CD8-positive, alpha-beta memory T cell (primary cell): ENCODE measurements at regions of chr1 and their contacts with region 1.

Region 1: DNA sequence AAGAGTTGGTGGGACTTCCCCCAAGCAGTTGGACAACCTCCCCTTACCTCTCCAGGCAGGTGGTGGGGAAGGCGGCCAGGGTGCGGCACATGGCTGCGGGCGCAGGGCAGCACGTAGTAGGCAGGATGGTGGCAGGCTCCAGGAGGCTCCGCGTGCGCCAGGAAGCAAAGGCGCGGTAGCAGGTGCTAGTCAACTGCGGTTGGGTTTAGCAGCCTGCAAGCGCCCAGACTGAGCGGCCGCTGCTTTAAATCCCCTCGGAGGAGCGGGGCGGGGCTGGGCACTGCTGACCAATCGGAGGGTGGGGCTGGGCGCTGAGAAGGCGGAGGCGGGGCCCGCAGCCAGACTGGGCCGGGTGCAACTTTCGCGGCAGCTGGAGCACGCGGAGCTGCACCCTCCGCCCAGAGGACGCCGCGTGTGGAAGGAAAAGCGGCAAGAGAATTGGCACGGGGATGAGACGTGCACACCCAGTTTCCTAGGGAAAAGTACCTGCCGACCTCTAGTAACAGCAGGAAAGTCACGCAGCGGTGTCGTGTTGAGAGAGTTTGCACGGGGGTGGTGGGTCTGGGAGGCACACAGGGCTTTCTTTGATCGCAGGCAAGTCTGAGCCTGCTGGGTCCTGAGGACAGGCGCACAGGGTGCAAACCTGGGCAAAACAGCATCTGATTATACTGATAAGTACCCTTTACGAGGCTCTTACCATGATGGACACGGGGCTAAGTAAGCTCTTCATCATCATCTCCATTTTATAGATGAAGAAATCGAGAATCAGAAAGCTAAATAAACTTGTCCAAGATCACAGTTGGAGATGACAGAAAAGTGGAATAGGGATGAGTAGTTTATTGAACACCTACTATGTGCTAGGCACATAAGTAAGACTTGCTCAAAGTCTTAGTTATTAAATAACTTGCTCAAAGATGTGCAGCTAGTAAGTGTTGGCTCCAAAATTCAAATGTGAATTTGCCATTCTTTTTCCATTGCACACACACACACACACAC is at the start of gene RGS16:
- DNase-seq: peak; percentile 73 to 90 (median 84)
- H3K4me3 ChIP-seq: peak within 1 kb of the TSS; percentile 35
- H3K4me3 Mint-ChIP-seq: peak within 1 kb of the TSS in 6 of 7 donors; percentile 75 to 90 (median 80)
- H3K27ac ChIP-seq: no peak within 1 kb of the TSS
- H3K27ac Mint-ChIP-seq: peak within 1 kb of the TSS in 5 of 8 donors; percentile 8 to 95 (median 89)
- H3K4me1 ChIP-seq: peaks cover 26% of the 10 kb centered on the region
- H3K4me1 Mint-ChIP-seq: peaks cover 4 to 20% (median 17%) of the 10 kb centered on the region in 3 donors
- H3K27me3 ChIP-seq: no peaks in the 10 kb centered on the region
- H3K27me3 Mint-ChIP-seq: peaks cover 26 to 28% of the 10 kb centered on the region in 2 donors
- total RNA-seq, gene RGS16: 58.9 to 59.9 TPM

Region 2: GRCh38 chr1:182575539-182576149 is 28.8 kb before region 1 on chr1:
- CTCF ChIA-PET with region 1: no interaction called
- POLR2A ChIA-PET with region 1: no interaction called
- DNase-seq: no peak
- H3K4me3 ChIP-seq: no peak overlapping the region
- H3K4me3 Mint-ChIP-seq: no peak overlapping the region
- H3K27ac ChIP-seq: no peak overlapping the region
- H3K27ac Mint-ChIP-seq: no peak overlapping the region
- H3K4me1 ChIP-seq: no peaks in the 10 kb centered on the region
- H3K4me1 Mint-ChIP-seq: peaks cover 24 to 30% (median 25%) of the 10 kb centered on the region in 3 donors
- H3K27me3 ChIP-seq: no peaks in the 10 kb centered on the region
- H3K27me3 Mint-ChIP-seq: no peaks in the 10 kb centered on the region

Region 3: GRCh38 chr1:182588500-182589452 is 15.7 kb before region 1 on chr1 and contains the start of gene RNASEL:
- CTCF ChIA-PET with region 1: interaction called, 44 read pairs
- POLR2A ChIA-PET with region 1: interaction called, 5 read pairs
- DNase-seq: peak; percentile 41 to 74 (median 64)
- H3K4me3 ChIP-seq: peak within 1 kb of the TSS; percentile 90
- H3K4me3 Mint-ChIP-seq: peak within 1 kb of the TSS; percentile 92 to 99 (median 97)
- H3K27ac ChIP-seq: peak within 1 kb of the TSS; percentile 99
- H3K27ac Mint-ChIP-seq: peak within 1 kb of the TSS; percentile 98 to 100 (median 100)
- H3K4me1 ChIP-seq: peaks cover 38% of the 10 kb centered on the region
- H3K4me1 Mint-ChIP-seq: peaks cover 45 to 59% (median 55%) of the 10 kb centered on the region in 3 donors
- H3K27me3 ChIP-seq: no peaks in the 10 kb centered on the region
- H3K27me3 Mint-ChIP-seq: peaks cover 0 to 3% of the 10 kb centered on the region in 2 donors
- total RNA-seq, gene RNASEL: 5.3 to 5.6 TPM

Region 4: GRCh38 chr1:182614796-182615454 is 10.5 kb after region 1 on chr1:
- CTCF ChIA-PET with region 1: interaction called, 24 read pairs
- POLR2A ChIA-PET with region 1: interaction called, 8 read pairs
- DNase-seq: peak; percentile 20 to 61 (median 35)
- H3K4me3 ChIP-seq: peak overlapping the region; percentile 52
- H3K4me3 Mint-ChIP-seq: peak overlapping the region; percentile 64 to 89 (median 82)
- H3K27ac ChIP-seq: no peak overlapping the region
- H3K27ac Mint-ChIP-seq: peak overlapping the region; percentile 34 to 98 (median 90)
- H3K4me1 ChIP-seq: peaks cover 29% of the 10 kb centered on the region
- H3K4me1 Mint-ChIP-seq: peaks cover 34 to 41% (median 34%) of the 10 kb centered on the region in 3 donors
- H3K27me3 ChIP-seq: peaks cover 6% of the 10 kb centered on the region
- H3K27me3 Mint-ChIP-seq: peaks cover 62 to 68% of the 10 kb centered on the region in 2 donors

Region 5: DNA sequence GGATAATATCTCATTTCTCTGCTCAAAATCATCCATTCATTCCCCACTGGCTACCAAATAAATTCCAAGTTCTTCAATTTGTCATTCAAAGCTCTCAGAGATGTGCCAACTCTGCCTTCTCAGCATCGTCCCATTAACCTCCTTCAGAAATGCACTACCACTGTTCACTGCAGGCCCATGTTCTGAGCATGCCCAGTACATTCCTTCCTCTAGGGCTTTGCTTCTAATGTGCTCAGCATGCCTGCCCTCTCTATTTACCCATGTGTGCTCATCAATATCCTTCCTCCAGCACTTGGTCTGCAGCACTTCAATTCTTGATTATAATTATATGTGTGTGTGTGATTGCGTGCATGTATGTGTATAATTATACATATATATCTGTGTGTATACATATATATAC is 116.0 kb after region 1 on chr1:
- CTCF ChIA-PET with region 1: no interaction called
- POLR2A ChIA-PET with region 1: no interaction called
- DNase-seq: no peak
- H3K4me3 ChIP-seq: no peak overlapping the region
- H3K4me3 Mint-ChIP-seq: no peak overlapping the region
- H3K27ac ChIP-seq: no peak overlapping the region
- H3K27ac Mint-ChIP-seq: no peak overlapping the region
- H3K4me1 ChIP-seq: peaks cover 8% of the 10 kb centered on the region
- H3K4me1 Mint-ChIP-seq: peaks cover 11 to 15% (median 13%) of the 10 kb centered on the region in 3 donors
- H3K27me3 ChIP-seq: no peaks in the 10 kb centered on the region
- H3K27me3 Mint-ChIP-seq: peaks cover 1 to 3% of the 10 kb centered on the region in 2 donors

Region 6: GRCh38 chr1:182789138-182790076 is 184.9 kb after region 1 on chr1 and contains the start of gene NPL:
- CTCF ChIA-PET with region 1: interaction called, 306 read pairs
- POLR2A ChIA-PET with region 1: interaction called, 4 read pairs
- DNase-seq: peak; percentile 76 to 88 (median 85)
- H3K4me3 ChIP-seq: peak within 1 kb of the TSS; percentile 89
- H3K4me3 Mint-ChIP-seq: peak within 1 kb of the TSS; percentile 89 to 94 (median 91)
- H3K27ac ChIP-seq: peak within 1 kb of the TSS; percentile 28
- H3K27ac Mint-ChIP-seq: peak within 1 kb of the TSS; percentile 71 to 94 (median 90)
- H3K4me1 ChIP-seq: peaks cover 15% of the 10 kb centered on the region
- H3K4me1 Mint-ChIP-seq: peaks cover 11 to 17% (median 12%) of the 10 kb centered on the region in 3 donors
- H3K27me3 ChIP-seq: no peaks in the 10 kb centered on the region
- H3K27me3 Mint-ChIP-seq: peaks cover 2 to 3% of the 10 kb centered on the region in 2 donors
- total RNA-seq, gene NPL: 9.3 to 12.3 TPM